Right ventricle myocardium superior (tissue), 1 donor: ENCODE measurements at regions of chr10 and their contacts with region 1.

Region 1: GRCh38 chr10:27041196-27041595 is 59.1 kb downstream of the ANKRD26 start:
- DNase-seq: no peak
- ATAC-seq: no peak

Region 2: GRCh38 chr10:26357203-26357602 is 684.0 kb before region 1 on chr10:
- intact Hi-C with region 1: no loop called
- DNase-seq: no peak
- ATAC-seq: no peak

Region 3: DNA sequence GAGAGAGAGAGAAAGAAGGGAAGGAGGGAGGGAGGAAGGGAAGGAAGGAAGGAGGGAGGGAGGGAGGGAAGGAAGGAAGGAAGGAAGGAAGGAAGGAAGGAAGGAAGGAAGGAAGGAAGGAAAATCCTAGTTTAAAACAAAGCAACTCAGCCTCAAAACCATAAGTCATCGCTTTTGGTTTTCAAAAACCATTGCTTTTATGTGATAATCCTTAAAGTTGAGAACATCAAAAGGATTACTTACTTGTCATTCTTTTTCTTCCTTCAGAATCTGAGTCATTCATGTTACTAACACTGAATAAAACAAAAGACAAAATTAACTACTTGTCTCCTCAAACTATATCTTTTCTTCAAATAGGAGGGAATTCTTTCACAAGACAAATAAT is 365.3 kb before region 1 on chr10:
- intact Hi-C with region 1: no loop called
- DNase-seq: no peak
- ATAC-seq: no peak

Region 4: GRCh38 chr10:27138277-27138676 is 97.1 kb after region 1 on chr10:
- intact Hi-C with region 1: loop called (anchors 10 kb)
- DNase-seq: no peak
- ATAC-seq: no peak